Naive thymus-derived CD4-positive, alpha-beta T cell (primary cell): ENCODE measurements at regions of chr18 and their contacts with region 1.

Region 1: DNA sequence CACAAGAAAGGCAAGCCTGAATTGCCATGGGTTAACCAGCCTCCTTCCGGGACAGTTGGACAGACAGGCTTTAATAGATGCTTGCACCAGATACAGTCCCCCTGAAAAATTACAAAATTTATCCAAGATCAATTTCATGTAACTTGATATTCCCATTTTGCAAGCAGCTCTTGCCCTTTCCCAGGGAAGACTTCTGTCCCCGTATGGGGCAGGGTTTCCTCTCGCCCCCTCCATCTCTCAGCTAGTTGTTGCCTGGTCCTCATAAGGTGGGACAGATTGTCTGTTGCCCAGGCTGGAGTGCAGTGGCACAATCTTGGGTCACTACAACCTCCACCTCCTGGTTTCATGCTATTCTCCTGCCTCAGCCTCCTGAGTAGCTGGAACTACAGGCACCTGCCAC is 61.2 kb downstream of the TTC39C start:
- DNase-seq: no peak
- ATAC-seq: no peak
- H3K4me3 ChIP-seq: no peak overlapping the region
- H3K4me3 Mint-ChIP-seq: peak overlapping the region in 3 of 10 donors; percentile 20 to 38 (median 29)
- H3K27ac ChIP-seq: no peak overlapping the region
- H3K27ac Mint-ChIP-seq: peak overlapping the region in 8 of 9 donors; percentile 52 to 86 (median 67)
- H3K4me1 ChIP-seq: peaks cover 7 to 16% of the 10 kb centered on the region in 2 donors
- H3K4me1 Mint-ChIP-seq: peaks cover 24 to 63% (median 51%) of the 10 kb centered on the region in 7 donors
- H3K27me3 ChIP-seq: no peaks in the 10 kb centered on the region
- H3K27me3 Mint-ChIP-seq: no peaks in the 10 kb centered on the region

Region 2: DNA sequence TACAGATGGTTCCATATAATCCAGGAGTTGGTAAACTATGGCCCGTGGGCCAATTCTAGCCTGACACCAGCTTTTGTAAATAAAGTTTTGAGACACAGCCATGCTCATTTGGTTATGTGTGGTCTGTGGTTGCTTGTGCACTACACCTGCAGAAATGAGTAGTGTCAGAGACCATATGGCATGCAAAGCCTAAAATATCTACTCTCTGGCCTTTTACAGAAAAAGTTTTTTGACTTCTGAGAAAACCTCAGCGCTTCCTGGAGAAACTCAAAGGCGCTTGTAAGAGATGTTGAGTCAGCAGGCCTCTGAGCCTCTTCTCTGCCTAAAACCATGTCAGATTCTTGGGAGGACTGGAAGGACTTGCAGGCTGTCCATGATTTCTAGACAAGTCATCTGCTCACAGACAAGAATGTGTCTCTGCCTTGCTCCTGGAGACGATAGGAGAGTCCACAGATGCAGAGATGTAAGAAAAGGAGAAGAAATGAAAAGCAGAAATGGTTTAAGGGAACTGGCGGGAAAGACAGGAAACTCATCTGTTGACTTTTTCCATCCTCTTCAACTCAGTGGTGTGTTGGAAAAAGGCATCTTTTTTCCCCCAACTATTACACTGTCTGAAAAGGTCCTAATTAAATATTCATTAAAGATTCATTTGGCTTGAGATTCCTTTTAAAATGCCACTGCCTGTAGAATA is 55.9 kb before region 1 on chr18:
- CTCF ChIA-PET with region 1: no interaction called
- POLR2A ChIA-PET with region 1: interaction called, 3 read pairs
- intact Hi-C with region 1: loop called (anchors 1 to 5 kb)
- DNase-seq: peak in 8 of 9 donors; percentile 53 to 74 (median 62)
- ATAC-seq: peak; percentile 76
- H3K4me3 ChIP-seq: peak overlapping the region; percentile 32
- H3K4me3 Mint-ChIP-seq: peak overlapping the region; percentile 63 to 97 (median 80)
- H3K27ac ChIP-seq: peak overlapping the region; percentile 53
- H3K27ac Mint-ChIP-seq: peak overlapping the region; percentile 75 to 97 (median 93)
- H3K4me1 ChIP-seq: peaks cover 79 to 84% of the 10 kb centered on the region in 2 donors
- H3K4me1 Mint-ChIP-seq: peaks cover 76 to 93% (median 86%) of the 10 kb centered on the region in 7 donors
- H3K27me3 ChIP-seq: no peaks in the 10 kb centered on the region
- H3K27me3 Mint-ChIP-seq: no peaks in the 10 kb centered on the region